Activated CD8-positive, alpha-beta memory T cell treated with anti-CD3 and anti-CD28 coated beads, Interleukin-2, amount 10 ng/mL, durations not matched to agents 7 days and 5 days (primary cell): ENCODE measurements at regions of chr22 and their contacts with region 1.

Region 1: GRCh38 chr22:37608477-37609239 is at the start of gene GGA1:
- DNase-seq: peak; percentile 99
- ATAC-seq: peak; percentile 80
- H3K4me3 Mint-ChIP-seq: peak within 1 kb of the TSS; percentile 89
- H3K27ac Mint-ChIP-seq: peak within 1 kb of the TSS; percentile 94
- H3K4me1 Mint-ChIP-seq: peaks cover 60% of the 10 kb centered on the region
- H3K27me3 Mint-ChIP-seq: no peaks in the 10 kb centered on the region
- total RNA-seq, gene GGA1: 76.9 to 85.9 TPM

Region 2: DNA sequence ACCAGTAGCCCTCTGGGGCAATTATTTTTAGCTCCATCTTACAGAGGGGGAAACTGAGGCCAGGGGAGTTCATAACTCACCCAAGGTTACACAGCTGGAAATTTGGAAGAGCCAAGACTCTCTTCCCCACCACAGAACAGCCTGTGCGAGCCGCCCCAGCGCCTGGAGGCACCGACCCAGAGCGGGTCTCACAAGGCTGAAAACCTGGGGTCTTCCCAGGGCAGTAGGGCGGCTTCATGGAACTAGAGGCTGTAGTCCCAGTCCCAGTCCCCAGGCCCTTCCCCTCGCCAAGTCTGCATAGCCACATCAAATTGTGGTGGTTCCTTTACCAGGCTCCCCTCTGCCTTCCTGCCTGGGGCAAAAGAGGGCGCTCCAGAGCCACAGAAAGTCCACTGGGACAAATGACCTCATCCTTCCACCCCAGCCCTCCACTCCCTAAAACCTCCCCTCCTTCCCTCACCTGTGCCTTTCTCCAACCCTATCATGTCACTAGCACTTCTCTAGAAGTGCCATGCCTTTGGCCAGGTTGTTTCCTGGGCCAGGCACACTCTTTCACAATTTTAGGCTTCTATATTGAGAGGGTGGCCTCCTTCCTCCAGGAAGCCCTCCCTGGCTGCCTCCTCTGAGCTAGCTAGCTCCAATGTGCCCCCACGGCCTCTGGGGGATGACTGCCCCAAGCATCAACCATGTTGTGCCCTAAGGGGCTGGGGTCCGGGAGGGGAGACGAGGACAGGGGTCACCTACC is 63.5 kb before region 1 on chr22:
- CTCF ChIA-PET with region 1: interaction called, 36 read pairs
- DNase-seq: peak; percentile 79
- ATAC-seq: peak; percentile 75
- H3K4me3 Mint-ChIP-seq: no peak overlapping the region
- H3K27ac Mint-ChIP-seq: peak overlapping the region; percentile 2
- H3K4me1 Mint-ChIP-seq: peaks cover 32% of the 10 kb centered on the region
- H3K27me3 Mint-ChIP-seq: peaks cover 15% of the 10 kb centered on the region

Region 3: GRCh38 chr22:37633625-37634416 is 25.2 kb after region 1 on chr22:
- CTCF ChIA-PET with region 1: interaction called, 156 read pairs
- DNase-seq: peak; percentile 89
- ATAC-seq: peak; percentile 60
- H3K4me3 Mint-ChIP-seq: peak overlapping the region; percentile 72
- H3K27ac Mint-ChIP-seq: peak overlapping the region; percentile 91
- H3K4me1 Mint-ChIP-seq: peaks cover 74% of the 10 kb centered on the region
- H3K27me3 Mint-ChIP-seq: no peaks in the 10 kb centered on the region

Region 4: DNA sequence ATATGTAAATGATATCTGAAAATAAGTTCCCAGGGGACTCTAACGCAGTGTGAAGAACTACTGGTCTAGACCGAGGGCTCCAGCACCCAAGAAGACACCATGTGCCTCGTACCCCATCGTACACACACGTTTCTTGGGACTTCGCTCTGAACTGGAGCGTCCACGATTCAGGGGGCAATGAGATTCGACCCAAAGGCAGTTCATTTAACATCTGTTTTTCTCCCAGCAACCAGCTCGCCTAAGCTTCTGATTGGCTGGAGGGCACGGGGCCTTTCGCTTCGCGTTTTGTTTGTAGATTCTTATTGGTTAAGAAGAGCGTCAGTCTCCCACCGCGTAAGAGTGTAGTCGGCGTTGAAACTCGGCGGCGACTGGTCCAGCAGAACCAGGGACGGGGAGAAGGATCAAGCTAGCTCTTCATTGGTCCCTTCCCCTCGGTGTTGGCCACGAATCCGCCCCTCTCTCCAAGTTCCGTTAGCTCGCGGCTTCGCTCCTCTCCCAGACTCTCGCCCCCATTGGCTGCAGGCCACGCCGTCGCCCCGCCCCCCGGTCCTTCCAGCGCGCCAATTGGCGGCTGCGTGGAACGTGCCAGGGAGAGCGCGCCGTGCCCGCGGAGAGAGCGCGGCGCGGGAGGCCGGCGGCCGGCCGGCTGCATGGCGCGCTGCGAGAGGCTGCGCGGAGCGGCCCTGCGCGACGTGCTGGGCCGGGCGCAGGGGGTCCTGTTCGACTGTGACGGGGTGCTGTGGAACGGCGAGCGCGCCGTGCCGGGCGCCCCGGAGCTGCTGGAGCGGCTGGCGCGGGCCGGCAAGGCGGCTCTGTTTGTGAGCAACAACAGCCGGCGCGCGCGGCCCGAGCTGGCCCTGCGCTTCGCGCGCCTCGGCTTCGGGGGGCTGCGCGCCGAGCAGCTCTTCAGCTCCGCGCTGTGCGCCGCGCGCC is 49.7 kb after region 1 on chr22 and contains the start of gene PDXP:
- CTCF ChIA-PET with region 1: interaction called, 17 read pairs
- DNase-seq: peak; percentile 99
- ATAC-seq: peak; percentile 98
- H3K4me3 Mint-ChIP-seq: peak within 1 kb of the TSS; percentile 85
- H3K27ac Mint-ChIP-seq: peak within 1 kb of the TSS; percentile 88
- H3K4me1 Mint-ChIP-seq: peaks cover 39% of the 10 kb centered on the region
- H3K27me3 Mint-ChIP-seq: no peaks in the 10 kb centered on the region
- total RNA-seq, gene PDXP: 25.9 to 32.6 TPM

Region 5: GRCh38 chr22:37686002-37686982 is 77.6 kb after region 1 on chr22 and contains the start of gene NOL12:
- CTCF ChIA-PET with region 1: interaction called, 98 read pairs
- DNase-seq: peak; percentile 85
- ATAC-seq: peak; percentile 92
- H3K4me3 Mint-ChIP-seq: peak within 1 kb of the TSS; percentile 82
- H3K27ac Mint-ChIP-seq: peak within 1 kb of the TSS; percentile 90
- H3K4me1 Mint-ChIP-seq: peaks cover 27% of the 10 kb centered on the region
- H3K27me3 Mint-ChIP-seq: no peaks in the 10 kb centered on the region
- total RNA-seq, gene NOL12: 49.9 to 53.3 TPM